ENCODE measurements at regions of chr4 and their contacts with region 1.

Region 1: DNA sequence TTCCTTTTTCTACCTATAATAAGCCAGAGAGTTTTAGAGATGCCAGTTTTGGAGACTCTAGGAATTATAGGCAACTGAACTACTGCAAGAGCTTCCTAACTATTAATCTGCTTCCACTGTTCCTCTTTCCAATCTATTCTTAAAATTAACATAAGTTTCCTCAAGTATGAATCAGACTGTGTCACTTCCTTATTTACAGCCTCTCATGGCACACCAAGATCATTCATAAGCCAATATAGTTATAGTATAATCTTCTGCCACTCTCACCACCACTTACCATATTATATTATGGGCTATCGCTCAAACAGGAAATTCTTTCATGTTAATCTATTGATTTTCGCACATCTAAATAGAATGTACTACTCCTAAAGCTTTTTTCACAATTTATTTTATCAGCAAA is 383.5 kb downstream of the STPG2 start:
- DNase-seq: no peak
- ATAC-seq: no peak
- H3K4me3 ChIP-seq: no peak overlapping the region
- H3K27ac ChIP-seq: no peak overlapping the region
- H3K4me1 ChIP-seq: no peaks in the 10 kb centered on the region
- H3K27me3 ChIP-seq: no peaks in the 10 kb centered on the region
- CTCF ChIP-seq: no peak
- POLR2A ChIP-seq: no peak
- RAD21 ChIP-seq: no peak

Region 2: DNA sequence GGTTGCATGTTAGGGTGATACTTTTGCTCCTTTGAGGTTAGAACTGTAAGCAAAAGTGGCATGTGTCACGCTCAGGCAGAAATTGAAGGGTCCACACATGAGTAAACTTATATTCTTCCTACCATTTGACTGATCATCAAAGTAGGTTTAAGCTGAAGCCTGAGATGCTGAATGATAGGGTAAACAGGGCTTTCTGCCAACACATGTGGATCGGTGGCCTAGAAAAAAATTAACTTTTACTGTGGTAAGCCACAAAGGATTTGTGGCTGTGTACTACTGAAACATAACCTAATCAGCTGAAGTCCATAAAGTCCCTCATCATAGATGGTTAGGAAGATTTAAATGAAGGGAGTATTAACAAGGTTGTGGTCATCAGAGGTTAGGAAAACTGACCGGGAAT is 686.6 kb before region 1 on chr4:
- CTCF ChIA-PET with region 1: no interaction called
- POLR2A ChIA-PET with region 1: no interaction called
- dilution Hi-C with region 1: no loop called
- in situ Hi-C with region 1: no loop called
- intact Hi-C with region 1: loop called (anchors 10 kb)
- DNase-seq: no peak
- ATAC-seq: no peak
- H3K4me3 ChIP-seq: no peak overlapping the region
- H3K27ac ChIP-seq: no peak overlapping the region
- H3K4me1 ChIP-seq: no peaks in the 10 kb centered on the region
- H3K27me3 ChIP-seq: no peaks in the 10 kb centered on the region
- CTCF ChIP-seq: no peak
- POLR2A ChIP-seq: no peak
- RAD21 ChIP-seq: no peak